ENCODE measurements at regions of chr3 and their contacts with region 1.

Region 1: GRCh38 chr3:72847751-72848702 is at the start of gene SHQ1:
- H3K4me3 Mint-ChIP-seq: peak within 1 kb of the TSS; percentile 91
- H3K27ac Mint-ChIP-seq: peak within 1 kb of the TSS; percentile 77
- H3K4me1 Mint-ChIP-seq: peaks cover 34% of the 10 kb centered on the region
- H3K27me3 Mint-ChIP-seq: peaks cover 5% of the 10 kb centered on the region

Region 2: DNA sequence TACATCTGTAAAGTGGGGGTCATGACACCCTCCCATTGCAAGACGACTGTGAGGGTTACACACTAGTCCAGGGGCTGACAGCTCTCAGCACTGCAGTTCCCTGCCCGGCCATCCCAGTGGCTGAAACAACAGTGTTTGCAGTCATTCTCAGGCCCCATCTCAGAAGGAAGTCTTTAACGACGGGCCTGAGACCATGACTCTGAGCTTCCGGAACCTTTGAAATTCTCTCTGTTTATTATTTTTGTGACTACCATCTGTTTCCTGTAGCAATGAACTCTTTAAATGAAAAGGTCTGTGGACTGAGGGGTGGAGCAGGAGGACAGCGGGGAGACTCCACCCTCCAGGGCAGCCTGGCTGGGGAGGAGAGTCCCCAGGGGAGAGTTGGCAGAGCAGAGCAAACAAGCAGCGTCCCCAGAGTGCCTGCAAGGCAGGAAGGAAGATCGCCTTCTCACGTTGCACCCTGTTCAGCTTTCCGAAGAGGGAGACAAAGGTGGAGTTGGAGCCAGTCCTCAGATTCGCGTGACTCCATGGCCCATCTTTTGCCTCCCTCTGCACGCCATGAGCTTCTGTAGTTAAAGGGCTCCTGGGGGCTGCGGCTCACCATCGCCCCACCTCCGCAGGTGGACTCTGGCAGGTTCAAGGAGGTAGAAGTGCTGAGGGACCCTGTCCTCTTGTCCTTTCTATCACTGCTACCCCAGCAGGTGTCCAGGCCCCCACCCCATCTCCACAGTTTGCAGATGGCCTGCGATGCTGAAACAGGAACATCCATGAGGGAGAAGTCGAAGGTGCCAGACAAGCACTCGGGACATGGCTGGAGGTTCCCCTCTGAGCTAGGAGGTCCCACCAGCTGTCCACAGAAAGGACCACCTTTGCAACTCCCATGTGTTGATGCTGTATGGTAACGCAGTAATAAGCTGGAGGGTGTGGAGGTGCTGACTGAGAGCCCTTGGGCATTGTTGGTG is 537.3 kb before region 1 on chr3:
- intact Hi-C with region 1: no loop called
- H3K4me3 Mint-ChIP-seq: peak overlapping the region; percentile 42
- H3K27ac Mint-ChIP-seq: peak overlapping the region; percentile 78
- H3K4me1 Mint-ChIP-seq: peaks cover 29% of the 10 kb centered on the region
- H3K27me3 Mint-ChIP-seq: peaks cover 19% of the 10 kb centered on the region

Region 3: DNA sequence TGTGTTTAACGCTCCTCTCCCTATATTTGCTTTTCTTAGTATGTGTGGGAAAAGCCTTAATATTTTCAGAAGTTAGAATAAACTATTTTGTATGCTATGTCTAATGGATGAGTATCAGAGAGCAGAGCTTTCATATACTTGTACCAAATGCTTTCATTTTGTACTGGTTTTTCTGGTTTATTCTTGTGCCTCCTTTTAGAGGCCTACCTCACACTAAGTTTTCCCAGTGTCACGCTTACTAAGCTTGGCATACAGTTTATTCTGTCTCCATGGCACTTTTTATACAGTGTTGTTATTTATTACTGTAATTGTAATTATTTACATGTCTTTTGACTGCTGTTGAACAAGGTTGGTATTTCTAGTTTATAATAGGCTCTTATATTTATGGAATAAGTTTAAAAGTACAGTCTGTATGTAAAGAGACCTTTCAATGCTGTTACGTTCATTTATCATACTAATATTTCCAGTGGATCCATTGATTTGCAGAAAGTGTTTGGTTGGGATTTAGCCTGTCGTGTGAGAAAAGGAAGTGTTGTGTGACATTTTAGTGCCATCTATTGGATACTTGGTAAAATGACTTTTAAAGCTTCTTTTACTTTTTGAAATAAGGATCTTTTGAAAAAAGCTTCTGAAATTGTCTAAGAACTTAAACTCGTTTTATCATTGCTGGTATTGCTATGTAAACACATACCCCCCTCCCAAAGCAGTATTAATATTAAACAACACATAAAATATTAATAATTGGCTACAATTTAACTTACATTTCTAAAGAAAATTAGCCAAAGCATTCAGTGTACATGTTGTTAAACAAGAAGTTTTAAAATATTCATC is 208.2 kb after region 1 on chr3:
- intact Hi-C with region 1: loop called (anchors 10 kb)
- H3K4me3 Mint-ChIP-seq: no peak overlapping the region
- H3K27ac Mint-ChIP-seq: no peak overlapping the region
- H3K4me1 Mint-ChIP-seq: peaks cover 17% of the 10 kb centered on the region
- H3K27me3 Mint-ChIP-seq: no peaks in the 10 kb centered on the region

Region 4: GRCh38 chr3:73086071-73086494 is 238.1 kb after region 1 on chr3:
- intact Hi-C with region 1: loop called (anchors 2 kb)
- H3K4me3 Mint-ChIP-seq: no peak overlapping the region
- H3K27ac Mint-ChIP-seq: no peak overlapping the region
- H3K4me1 Mint-ChIP-seq: no peaks in the 10 kb centered on the region
- H3K27me3 Mint-ChIP-seq: no peaks in the 10 kb centered on the region

Measured in dendritic cell treated with granulocyte-macrophage colony-stimulating factor and Interleukin-4, amounts not matched to agents 40 ng/mL and 50 ng/mL, for 4 days (primary cell).